HepG2 (cell line): ENCODE measurements at regions of chr16 and their contacts with region 1.

Region 1: GRCh38 chr16:67159593-67160406 is at the starts of genes FBXL8 and TRADD:
- DNase-seq: peak; percentile 58
- ATAC-seq: peak; percentile 79
- H3K4me3 ChIP-seq: peak within 1 kb of the TSS; percentile 91 to 94 (median 93)
- H3K27ac ChIP-seq: peak within 1 kb of the TSS; percentile 54
- H3K4me1 ChIP-seq: peaks cover 54% of the 10 kb centered on the region
- H3K27me3 ChIP-seq: peaks cover 4 to 5% of the 10 kb centered on the region in 2 experiments; a peak in 2 of 5 replicates
- CTCF ChIP-seq: peak; percentile 77
- EP300 ChIP-seq: 0 out of 4 replicates have a peak, but pooled peaks of 1 of the 2 experiments have one; percentile 3
- POLR2A ChIP-seq: peak; percentile 44 to 81; a peak in 3 of 4 replicates
- RAD21 ChIP-seq: peak; percentile 42
- total RNA-seq, gene FBXL8: 1.5 and 3.9 TPM in 2 replicates
- total RNA-seq, gene TRADD: 6.2 and 7.8 TPM in 2 replicates

Region 2: DNA sequence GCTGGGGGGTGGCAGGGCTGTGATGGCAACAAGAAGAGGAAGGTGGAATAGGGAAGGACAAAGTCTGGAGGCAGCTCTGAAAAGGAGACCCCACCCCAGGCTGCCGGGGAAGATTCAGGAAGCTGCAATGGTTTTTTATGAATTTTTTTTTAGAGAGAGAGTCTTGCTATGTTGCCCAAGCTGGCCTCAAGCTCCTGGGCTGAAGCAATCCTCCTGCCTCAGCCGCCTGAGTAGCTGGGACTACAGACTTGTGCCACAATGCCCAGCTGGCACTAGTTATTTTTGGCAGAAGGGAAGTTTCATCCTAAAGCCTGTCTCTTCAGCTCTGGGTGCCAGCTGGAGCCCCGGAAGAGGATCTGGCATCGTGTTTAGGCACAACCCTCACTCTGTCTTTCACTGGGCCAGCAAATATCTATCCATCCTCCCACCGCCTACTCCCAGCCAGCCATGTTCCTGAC is 200.1 kb before region 1 on chr16:
- CTCF ChIA-PET with region 1: no interaction called
- POLR2A ChIA-PET with region 1: no interaction called
- in situ Hi-C with region 1: no loop called
- intact Hi-C with region 1: loop called (anchors 5 kb)
- DNase-seq: no peak
- ATAC-seq: no peak
- H3K4me3 ChIP-seq: no peak overlapping the region
- H3K27ac ChIP-seq: no peak overlapping the region
- H3K4me1 ChIP-seq: peaks cover 69% of the 10 kb centered on the region
- H3K27me3 ChIP-seq: 0 out of 5 replicates have a peak, but pooled peaks cover 0 to 3% of the 10 kb centered on the region in 2 experiments
- CTCF ChIP-seq: no peak
- EP300 ChIP-seq: no peak
- POLR2A ChIP-seq: no peak
- RAD21 ChIP-seq: no peak

Region 3: GRCh38 chr16:67104061-67104460 is 55.7 kb before region 1 on chr16:
- CTCF ChIA-PET with region 1: interaction called, 20 read pairs
- POLR2A ChIA-PET with region 1: interaction called, 7 read pairs
- in situ Hi-C with region 1: no loop called
- intact Hi-C with region 1: no loop called
- DNase-seq: peak; percentile 68
- ATAC-seq: peak; percentile 92
- H3K4me3 ChIP-seq: no peak overlapping the region
- H3K27ac ChIP-seq: no peak overlapping the region
- H3K4me1 ChIP-seq: peaks cover 10% of the 10 kb centered on the region
- H3K27me3 ChIP-seq: no peaks in the 10 kb centered on the region
- CTCF ChIP-seq: peak; percentile 85
- EP300 ChIP-seq: no peak
- POLR2A ChIP-seq: no peak
- RAD21 ChIP-seq: peak; percentile 71

Region 4: GRCh38 chr16:67115639-67116038 is 44.2 kb before region 1 on chr16:
- CTCF ChIA-PET with region 1: no interaction called
- POLR2A ChIA-PET with region 1: interaction called, 21 read pairs
- in situ Hi-C with region 1: no loop called
- intact Hi-C with region 1: loop called (anchors 2 kb)
- DNase-seq: no peak
- ATAC-seq: no peak
- H3K4me3 ChIP-seq: no peak overlapping the region; a peak in 1 of 6 replicates
- H3K27ac ChIP-seq: peak overlapping the region; percentile 87
- H3K4me1 ChIP-seq: peaks cover 72% of the 10 kb centered on the region
- H3K27me3 ChIP-seq: no peaks in the 10 kb centered on the region; a peak in 1 of 5 replicates
- CTCF ChIP-seq: no peak
- EP300 ChIP-seq: no peak
- POLR2A ChIP-seq: no peak
- RAD21 ChIP-seq: no peak

Region 5: DNA sequence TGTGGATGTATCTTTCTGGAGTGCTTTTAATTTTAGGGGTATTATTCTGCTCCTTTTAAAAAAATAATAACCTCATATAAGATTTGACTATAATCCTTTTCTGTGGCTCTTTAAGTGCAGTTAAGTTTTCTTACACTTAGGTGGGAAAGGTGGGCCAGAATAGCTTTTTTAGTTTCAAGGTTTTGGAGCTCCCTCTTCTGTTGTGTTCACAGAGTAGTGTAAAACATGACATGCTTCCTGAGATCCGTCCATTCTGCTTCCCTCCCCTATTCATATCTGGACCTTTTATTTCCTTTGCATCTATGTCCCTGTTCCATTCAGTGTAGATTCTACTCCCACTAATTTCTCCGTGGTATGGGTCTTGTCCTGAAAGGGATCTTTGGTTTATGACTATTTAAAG is 179.7 kb after region 1 on chr16:
- CTCF ChIA-PET with region 1: no interaction called
- POLR2A ChIA-PET with region 1: no interaction called
- in situ Hi-C with region 1: no loop called
- intact Hi-C with region 1: no loop called
- DNase-seq: peak; percentile 21
- ATAC-seq: no peak; the same call in 2 of the 3 replicates
- H3K4me3 ChIP-seq: no peak overlapping the region
- H3K27ac ChIP-seq: no peak overlapping the region
- H3K4me1 ChIP-seq: peaks cover 6% of the 10 kb centered on the region
- H3K27me3 ChIP-seq: no peaks in the 10 kb centered on the region
- CTCF ChIP-seq: peak; percentile 53
- EP300 ChIP-seq: no peak
- POLR2A ChIP-seq: no peak
- RAD21 ChIP-seq: no peak